Activated CD8-positive, alpha-beta memory T cell treated with anti-CD3 and anti-CD28 coated beads, Interleukin-2, amount 10 ng/mL, durations not matched to agents 7 days and 5 days (primary cell): ENCODE measurements at regions of chr11 and their contacts with region 1.

Region 1: GRCh38 chr11:128630367-128631230 is 43.2 kb upstream of the ETS1 start:
- DNase-seq: peak; percentile 93
- ATAC-seq: peak; percentile 84
- H3K4me3 Mint-ChIP-seq: peak overlapping the region; percentile 52
- H3K27ac Mint-ChIP-seq: peak overlapping the region; percentile 93
- H3K4me1 Mint-ChIP-seq: peaks cover 67% of the 10 kb centered on the region
- H3K27me3 Mint-ChIP-seq: no peaks in the 10 kb centered on the region

Region 2: GRCh38 chr11:128172046-128172878 is 458.3 kb before region 1 on chr11:
- CTCF ChIA-PET with region 1: interaction called, 190 read pairs
- DNase-seq: peak; percentile 91
- ATAC-seq: peak; percentile 93
- H3K4me3 Mint-ChIP-seq: no peak overlapping the region
- H3K27ac Mint-ChIP-seq: no peak overlapping the region
- H3K4me1 Mint-ChIP-seq: peaks cover 9% of the 10 kb centered on the region
- H3K27me3 Mint-ChIP-seq: no peaks in the 10 kb centered on the region

Region 3: DNA sequence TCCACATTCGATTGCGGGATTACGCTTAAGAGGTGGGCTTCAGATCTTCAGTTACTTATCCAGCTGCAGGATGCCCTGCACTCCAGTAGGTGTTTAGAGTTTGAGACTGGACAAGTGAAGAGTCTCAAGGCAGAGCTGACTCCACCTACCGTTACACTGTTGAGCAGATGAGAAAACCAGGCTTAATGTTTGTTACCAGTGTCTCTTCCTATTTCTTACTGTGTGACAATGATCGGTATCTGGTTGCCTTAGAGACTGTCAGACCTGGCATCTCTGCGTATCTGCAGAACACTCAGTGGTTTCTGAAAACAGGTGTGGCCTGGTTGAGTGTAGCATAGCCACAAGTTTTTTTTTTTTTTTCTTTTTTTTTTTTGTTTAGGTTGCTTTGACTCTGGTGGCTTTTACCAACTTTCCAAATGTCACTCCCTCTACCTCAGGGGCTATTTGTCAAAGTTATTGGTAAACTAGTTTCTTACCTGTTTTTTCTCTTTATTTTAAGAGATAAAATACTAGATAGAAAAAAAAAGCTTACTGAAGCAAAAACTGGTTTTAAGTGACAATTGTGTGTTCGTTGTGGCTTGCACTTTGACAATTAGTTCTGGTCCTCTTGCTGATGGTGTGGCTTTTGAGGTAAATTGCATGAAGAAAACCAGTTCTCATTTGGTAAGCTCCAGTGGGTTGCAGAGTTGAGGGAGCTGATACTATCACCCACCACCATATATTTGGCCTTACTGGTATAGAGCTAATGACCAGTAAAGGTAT is 328.0 kb before region 1 on chr11:
- CTCF ChIA-PET with region 1: interaction called, 14 read pairs
- DNase-seq: peak; percentile 88
- ATAC-seq: peak; percentile 91
- H3K4me3 Mint-ChIP-seq: peak overlapping the region; percentile 90
- H3K27ac Mint-ChIP-seq: peak overlapping the region; percentile 98
- H3K4me1 Mint-ChIP-seq: peaks cover 74% of the 10 kb centered on the region
- H3K27me3 Mint-ChIP-seq: no peaks in the 10 kb centered on the region

Region 4: GRCh38 chr11:128379587-128380580 is 250.7 kb before region 1 on chr11:
- CTCF ChIA-PET with region 1: no interaction called
- DNase-seq: peak; percentile 48
- ATAC-seq: peak; percentile 94
- H3K4me3 Mint-ChIP-seq: no peak overlapping the region
- H3K27ac Mint-ChIP-seq: peak overlapping the region; percentile 67
- H3K4me1 Mint-ChIP-seq: peaks cover 31% of the 10 kb centered on the region
- H3K27me3 Mint-ChIP-seq: no peaks in the 10 kb centered on the region

Region 5: DNA sequence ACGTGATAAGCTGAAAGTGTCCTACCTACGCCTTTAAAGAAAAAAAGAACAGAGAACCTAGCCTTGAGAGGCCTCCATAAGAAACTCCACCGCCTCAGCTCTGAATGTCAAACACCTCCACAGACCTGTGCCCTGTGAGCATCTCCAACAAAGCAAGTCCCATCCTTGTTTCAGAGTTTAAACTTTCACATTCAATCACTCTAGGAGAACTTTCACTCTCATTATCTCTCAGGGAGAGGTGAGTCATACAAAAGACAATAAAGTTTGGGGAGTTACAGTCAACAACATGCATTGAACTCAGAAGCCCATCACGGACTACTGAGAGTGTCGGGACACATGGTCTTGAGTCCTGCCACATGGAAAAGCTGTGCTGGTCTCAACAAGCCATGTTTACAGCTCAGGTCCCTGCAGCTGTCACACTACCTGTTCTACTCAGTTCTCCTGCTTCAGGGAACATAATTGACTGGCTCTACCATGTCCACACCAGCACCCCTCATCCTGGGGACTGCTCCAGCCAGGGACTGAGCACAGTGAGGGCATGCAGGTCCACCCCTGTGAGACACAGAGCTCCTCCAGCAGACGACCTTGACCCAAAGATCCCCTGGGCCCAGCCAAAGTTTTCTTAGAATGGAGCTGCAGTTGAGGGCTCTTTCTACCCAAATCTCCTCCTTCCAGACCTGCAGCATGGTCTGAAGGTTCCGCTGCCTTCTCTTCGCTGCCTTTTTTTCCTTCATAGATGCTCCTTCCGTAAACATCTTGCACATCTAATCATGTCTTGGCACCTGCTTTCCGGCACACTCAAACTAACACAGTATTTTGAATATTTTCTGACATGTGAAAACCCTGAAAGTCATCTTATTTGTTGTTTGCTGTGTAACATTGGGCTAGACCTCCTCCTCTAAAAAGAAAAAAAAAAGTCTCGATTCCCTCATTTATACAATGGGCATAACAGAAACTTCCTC is 158.2 kb before region 1 on chr11:
- CTCF ChIA-PET with region 1: interaction called, 25 read pairs
- DNase-seq: peak; percentile 71
- ATAC-seq: peak; percentile 69
- H3K4me3 Mint-ChIP-seq: peak overlapping the region; percentile 59
- H3K27ac Mint-ChIP-seq: peak overlapping the region; percentile 95
- H3K4me1 Mint-ChIP-seq: peaks cover 95% of the 10 kb centered on the region
- H3K27me3 Mint-ChIP-seq: no peaks in the 10 kb centered on the region

Region 6: GRCh38 chr11:128512474-128512996 is 118.1 kb before region 1 on chr11:
- CTCF ChIA-PET with region 1: interaction called, 44 read pairs
- DNase-seq: peak; percentile 75
- ATAC-seq: peak; percentile 54
- H3K4me3 Mint-ChIP-seq: peak overlapping the region; percentile 99
- H3K27ac Mint-ChIP-seq: peak overlapping the region; percentile 99
- H3K4me1 Mint-ChIP-seq: peaks cover 89% of the 10 kb centered on the region
- H3K27me3 Mint-ChIP-seq: no peaks in the 10 kb centered on the region

Region 7: DNA sequence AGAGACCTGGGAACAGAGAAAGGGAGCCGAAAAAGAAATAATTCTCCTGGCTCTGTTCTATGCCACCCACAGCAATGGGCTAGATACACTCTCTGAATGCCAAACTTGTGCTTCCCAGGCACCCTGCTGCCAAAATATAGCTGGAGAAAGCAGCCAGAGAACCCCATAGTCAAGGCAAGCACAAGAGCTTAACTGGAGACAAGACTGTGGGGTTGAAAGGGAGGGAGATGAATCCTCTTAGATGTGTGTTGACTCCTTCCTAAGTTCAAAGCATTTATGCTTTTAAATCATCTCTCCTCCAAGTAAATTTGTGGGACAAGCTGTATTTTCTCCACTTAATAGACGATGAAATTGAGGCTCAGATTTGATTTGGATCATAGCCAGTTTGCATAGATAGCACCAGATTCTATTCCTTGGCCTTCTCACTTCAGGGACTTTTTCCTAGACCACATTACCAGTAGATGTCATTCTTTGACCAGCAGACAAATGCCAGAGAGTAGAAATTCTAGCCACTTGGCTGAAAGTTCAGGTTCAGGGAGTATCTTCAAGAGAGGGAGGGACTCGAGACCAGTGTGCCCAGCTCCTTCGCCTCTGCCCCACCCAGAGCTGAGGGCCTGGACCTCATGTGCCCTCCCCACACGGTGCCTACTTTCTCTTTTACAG is 26.7 kb before region 1 on chr11:
- CTCF ChIA-PET with region 1: interaction called, 14 read pairs
- DNase-seq: peak; percentile 33
- ATAC-seq: no peak
- H3K4me3 Mint-ChIP-seq: no peak overlapping the region
- H3K27ac Mint-ChIP-seq: no peak overlapping the region
- H3K4me1 Mint-ChIP-seq: peaks cover 8% of the 10 kb centered on the region
- H3K27me3 Mint-ChIP-seq: no peaks in the 10 kb centered on the region

Region 8: DNA sequence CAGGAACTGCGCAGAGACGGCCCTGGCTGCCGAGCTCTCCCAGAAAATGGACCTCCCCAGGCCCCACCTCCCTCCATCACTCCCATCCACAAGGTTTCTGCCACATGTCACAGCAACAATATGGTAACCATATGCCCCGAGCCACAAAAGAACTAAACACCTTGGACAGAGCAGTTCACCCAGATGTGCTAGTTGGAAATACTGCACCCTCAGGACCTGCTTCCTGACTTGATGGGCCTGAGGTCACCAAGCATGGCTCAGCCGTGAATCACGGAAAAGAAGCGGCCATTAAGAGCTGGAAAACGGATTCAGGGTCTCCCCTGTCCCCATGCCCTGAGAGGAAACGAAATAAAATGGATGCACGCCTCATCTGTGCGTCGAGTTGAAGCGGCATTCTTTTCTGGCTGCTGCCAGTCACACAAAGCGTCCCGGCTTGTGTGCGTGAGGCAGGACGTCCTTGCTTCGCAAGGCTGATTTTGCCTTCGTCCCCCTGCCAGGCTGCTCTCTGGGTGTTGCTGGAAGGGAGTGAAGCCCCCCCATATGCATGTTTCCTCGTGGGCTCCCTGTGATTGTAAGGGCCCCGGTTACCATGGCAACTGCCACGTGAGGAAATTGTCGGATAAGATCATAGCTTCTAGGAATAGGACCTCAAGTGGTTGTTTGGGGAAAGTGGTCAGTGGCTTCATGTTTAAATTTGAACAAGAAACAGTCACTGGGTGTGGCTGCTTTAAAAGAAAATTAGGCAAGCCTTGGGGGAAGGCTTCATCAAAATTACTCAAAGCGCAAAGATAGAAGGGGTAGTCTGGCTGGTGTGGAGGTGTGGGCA is 114.9 kb after region 1 on chr11:
- CTCF ChIA-PET with region 1: no interaction called
- DNase-seq: peak; percentile 49
- ATAC-seq: peak; percentile 18
- H3K4me3 Mint-ChIP-seq: no peak overlapping the region
- H3K27ac Mint-ChIP-seq: peak overlapping the region; percentile 75
- H3K4me1 Mint-ChIP-seq: peaks cover 50% of the 10 kb centered on the region
- H3K27me3 Mint-ChIP-seq: no peaks in the 10 kb centered on the region

Region 9: GRCh38 chr11:128831174-128832120 is 200.8 kb after region 1 on chr11:
- CTCF ChIA-PET with region 1: interaction called, 42 read pairs
- DNase-seq: peak; percentile 92
- ATAC-seq: peak; percentile 90
- H3K4me3 Mint-ChIP-seq: peak overlapping the region; percentile 66
- H3K27ac Mint-ChIP-seq: peak overlapping the region; percentile 95
- H3K4me1 Mint-ChIP-seq: peaks cover 28% of the 10 kb centered on the region
- H3K27me3 Mint-ChIP-seq: no peaks in the 10 kb centered on the region